ENCODE measurements at regions of chr6 and their contacts with region 1.

Region 1: DNA sequence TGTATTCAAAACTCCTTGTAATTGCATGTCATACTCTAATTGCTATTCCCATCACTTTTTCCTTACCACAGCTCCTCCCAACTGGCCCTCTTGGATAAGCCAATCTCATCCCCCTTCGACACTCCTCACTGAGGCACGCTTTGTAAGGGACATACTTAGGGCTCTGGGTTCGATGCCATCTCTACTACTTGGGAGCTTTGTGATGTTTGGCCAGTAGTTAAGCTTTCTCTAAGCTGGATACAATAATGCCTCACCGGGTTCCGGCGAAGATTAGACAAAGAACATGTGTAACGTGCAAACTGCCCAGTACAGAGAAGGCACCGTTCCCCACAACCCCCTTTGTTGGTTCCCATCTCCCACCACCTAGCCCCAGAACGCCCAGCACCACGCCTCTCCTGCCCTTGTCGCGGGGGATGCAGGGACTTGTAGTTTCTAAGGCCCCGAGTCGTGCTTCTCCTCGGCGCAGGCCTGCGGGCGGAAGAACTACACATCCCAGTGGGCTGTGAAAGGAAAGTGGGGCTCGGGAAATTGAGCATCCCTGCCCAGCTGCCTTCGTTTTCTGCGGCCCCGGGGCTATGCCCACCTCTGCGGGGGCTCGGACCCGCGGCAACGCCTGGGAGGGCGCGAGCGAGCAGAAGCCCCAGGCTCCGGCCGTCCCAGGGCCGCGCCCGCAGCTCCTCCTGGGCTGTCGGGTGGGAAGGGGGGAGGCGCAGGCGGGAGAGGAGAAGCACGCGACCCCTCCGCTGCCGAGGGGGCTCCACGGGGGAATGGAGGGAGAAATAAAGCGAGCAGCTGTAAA is 1.1 kb upstream of the ZDHHC14 start:
- DNase-seq: peak; percentile 91 to 94 (median 94)
- ATAC-seq: peak; percentile 92 to 94 (median 92)
- H3K4me3 ChIP-seq: peak overlapping the region; percentile 81 to 100 (median 92)
- H3K27ac ChIP-seq: peak overlapping the region; percentile 83 to 99 (median 96)
- H3K4me1 ChIP-seq: peaks cover 0 to 31% (median 14%) of the 10 kb centered on the region in 12 donors
- H3K27me3 ChIP-seq: no peaks in the 10 kb centered on the region
- CTCF ChIP-seq: no peak
- POLR2A ChIP-seq: peak in 1 of 2 donors; percentile 28

Region 2: GRCh38 chr6:156579564-156579963 is 800.3 kb before region 1 on chr6:
- intact Hi-C with region 1: no loop called
- DNase-seq: no peak
- ATAC-seq: no peak
- H3K4me3 ChIP-seq: no peak overlapping the region
- H3K27ac ChIP-seq: no peak overlapping the region
- H3K4me1 ChIP-seq: no peaks in the 10 kb centered on the region
- H3K27me3 ChIP-seq: no peaks in the 10 kb centered on the region
- CTCF ChIP-seq: no peak
- POLR2A ChIP-seq: no peak

Region 3: DNA sequence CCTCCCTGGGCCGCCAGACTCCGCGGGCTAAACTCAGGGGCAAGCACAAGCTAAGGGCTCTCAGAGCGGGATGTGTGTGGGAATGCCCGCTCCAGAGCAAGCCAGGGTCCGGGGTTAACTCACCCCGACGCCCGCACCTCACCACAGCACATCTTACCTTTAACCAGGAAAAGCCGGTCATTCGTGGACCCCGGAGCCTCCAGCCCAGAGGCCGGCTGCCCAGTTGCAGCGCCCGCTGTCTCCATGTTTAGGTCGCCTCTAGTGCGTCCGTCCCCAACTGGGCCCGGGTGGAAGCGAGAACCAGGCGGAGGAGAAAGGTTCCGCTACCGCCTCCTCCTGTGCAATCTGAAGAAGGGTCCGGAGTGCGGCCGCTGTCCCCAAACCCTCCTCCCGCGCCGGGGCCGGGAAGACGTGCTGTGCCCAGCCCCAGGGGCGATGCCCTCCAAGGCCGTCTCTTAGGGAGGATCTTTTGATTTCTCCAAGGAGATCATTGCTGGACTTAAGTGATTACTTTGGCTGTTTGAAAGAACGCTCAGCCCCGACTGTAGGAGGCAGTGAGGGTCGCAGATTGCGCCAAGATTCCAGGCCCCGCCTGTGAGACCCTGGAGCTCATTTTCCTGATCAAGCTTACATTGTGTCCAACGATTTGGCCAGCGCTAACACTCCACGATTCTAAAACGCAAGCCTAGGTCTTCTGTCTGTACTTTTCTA is 56.4 kb before region 1 on chr6 and contains the start of gene TMEM242:
- intact Hi-C with region 1: loop called (anchors 2 to 5 kb)
- DNase-seq: peak; percentile 90 to 96 (median 93)
- ATAC-seq: peak; percentile 92 to 98 (median 96)
- H3K4me3 ChIP-seq: peak within 1 kb of the TSS; percentile 47 to 90 (median 75)
- H3K27ac ChIP-seq: peak within 1 kb of the TSS; percentile 67 to 97 (median 96)
- H3K4me1 ChIP-seq: peaks cover 0 to 47% (median 20%) of the 10 kb centered on the region in 12 donors
- H3K27me3 ChIP-seq: no peaks in the 10 kb centered on the region
- CTCF ChIP-seq: peak; percentile 12 to 50 (median 30)
- POLR2A ChIP-seq: peak in 1 of 2 donors; percentile 59
- total RNA-seq, gene TMEM242: 5.9 to 18.3 (median 13.2) TPM

Region 4: GRCh38 chr6:157434349-157435033 is 54.6 kb after region 1 on chr6:
- intact Hi-C with region 1: loop called in 4 of 10 experiments (anchors 5 kb)
- DNase-seq: peak in 3 of 5 donors; percentile 33 to 71 (median 56)
- ATAC-seq: peak in 3 of 4 donors; percentile 55 to 63 (median 56)
- H3K4me3 ChIP-seq: no peak overlapping the region
- H3K27ac ChIP-seq: peak overlapping the region; percentile 2 to 81 (median 60)
- H3K4me1 ChIP-seq: peaks cover 3 to 92% (median 59%) of the 10 kb centered on the region in 12 donors
- H3K27me3 ChIP-seq: no peaks in the 10 kb centered on the region
- CTCF ChIP-seq: no peak
- POLR2A ChIP-seq: no peak

Region 5: DNA sequence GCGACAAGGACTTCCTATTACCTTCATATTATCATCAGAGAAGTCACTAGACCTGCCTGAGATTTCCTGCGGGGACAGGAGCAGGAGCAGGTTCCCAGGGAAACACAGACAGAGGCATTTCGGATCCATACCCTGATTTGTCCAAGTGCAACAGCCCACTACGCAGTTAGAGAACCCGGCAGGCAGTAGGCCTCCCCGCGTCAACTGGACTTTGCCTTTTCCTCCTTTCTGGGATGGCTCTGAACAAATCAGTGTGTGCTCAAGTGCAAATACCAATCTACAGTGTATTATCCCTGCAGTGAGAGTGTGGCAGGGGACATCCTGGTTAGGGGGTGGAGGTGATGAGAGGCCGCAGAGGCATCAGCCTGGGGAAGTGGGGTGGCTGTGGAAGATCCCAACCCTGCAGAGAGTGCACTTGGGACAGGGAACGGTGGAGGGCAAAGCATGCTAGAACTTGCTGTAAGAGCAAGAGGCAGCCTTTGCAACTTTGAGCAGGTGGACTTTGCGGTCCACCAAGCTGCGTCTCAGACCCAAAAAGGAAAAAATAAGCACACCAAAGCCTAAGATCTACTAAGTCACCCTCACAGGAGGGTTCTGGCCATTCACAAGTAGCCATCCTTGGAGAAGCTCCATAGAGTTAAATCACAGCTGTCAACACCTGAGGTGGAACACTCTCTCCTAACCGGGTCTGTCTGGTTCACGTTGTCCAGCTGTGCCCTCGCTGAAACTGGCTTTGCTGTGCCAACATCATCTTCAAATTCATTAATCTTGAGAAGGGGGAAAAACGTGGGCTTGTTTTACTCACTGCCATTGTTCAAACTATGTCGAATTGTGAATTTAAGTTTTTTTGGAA is 160.3 kb after region 1 on chr6:
- intact Hi-C with region 1: loop called in 1 of 10 experiments (anchors 5 kb)
- DNase-seq: no peak
- ATAC-seq: peak in 2 of 4 donors; percentile 59 to 71
- H3K4me3 ChIP-seq: no peak overlapping the region
- H3K27ac ChIP-seq: no peak overlapping the region
- H3K4me1 ChIP-seq: peaks cover 0 to 50% (median 23%) of the 10 kb centered on the region in 12 donors
- H3K27me3 ChIP-seq: no peaks in the 10 kb centered on the region
- CTCF ChIP-seq: no peak
- POLR2A ChIP-seq: no peak

Region 6: DNA sequence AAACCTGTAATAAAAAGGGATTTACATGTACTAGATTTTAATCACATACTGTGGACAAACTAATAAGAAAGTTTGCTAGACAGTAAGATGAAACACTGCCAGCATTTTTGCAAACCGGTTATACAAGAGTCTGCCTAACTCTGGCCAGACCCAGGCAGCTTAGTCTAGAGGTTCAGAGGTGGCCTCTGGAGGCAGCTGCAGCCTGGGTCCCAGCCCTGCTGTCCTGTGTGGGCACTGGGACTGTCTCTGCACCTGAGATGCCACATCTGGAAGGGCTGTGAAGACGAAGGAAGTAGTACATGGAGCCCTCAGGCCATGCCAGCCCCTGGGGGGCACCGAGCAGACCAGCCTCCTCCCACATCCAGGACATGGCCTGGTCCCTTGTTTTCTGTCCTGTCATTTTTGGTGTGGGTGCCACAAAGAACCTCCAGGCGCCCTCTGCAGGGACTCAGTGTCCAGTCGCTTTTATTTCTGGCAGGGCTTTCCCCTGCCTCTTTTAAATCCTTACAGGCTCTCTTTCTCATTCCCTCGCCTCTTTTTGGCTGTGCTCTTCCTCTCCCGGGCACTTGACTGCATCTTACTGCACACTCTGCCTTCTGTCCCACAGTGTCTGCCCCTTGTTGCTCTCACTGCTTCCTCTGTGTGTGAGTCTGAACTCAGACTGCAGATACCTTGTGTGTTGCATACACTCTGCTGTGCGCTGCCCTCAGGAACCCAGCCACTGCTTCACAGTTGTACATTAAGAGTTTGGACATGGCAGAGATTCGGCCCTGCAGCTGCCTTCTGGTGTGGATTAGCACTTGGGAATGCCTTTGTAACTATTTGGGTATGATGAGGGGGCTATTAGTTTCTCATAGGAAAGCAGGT is 217.8 kb after region 1 on chr6:
- intact Hi-C with region 1: loop called in 4 of 10 experiments (anchors 5 to 10 kb)
- DNase-seq: peak in 2 of 5 donors; percentile 44 to 51
- ATAC-seq: peak; percentile 32 to 72 (median 65)
- H3K4me3 ChIP-seq: no peak overlapping the region
- H3K27ac ChIP-seq: peak overlapping the region in 1 of 12 donors; percentile 33
- H3K4me1 ChIP-seq: peaks cover 0 to 10% (median 2%) of the 10 kb centered on the region in 12 donors
- H3K27me3 ChIP-seq: no peaks in the 10 kb centered on the region
- CTCF ChIP-seq: peak; percentile 24 to 67 (median 52)
- POLR2A ChIP-seq: no peak

Measured in heart left ventricle (tissue), 16 donors.